Mucosa of descending colon (tissue), 3 donors: ENCODE measurements at regions of chr17 and their contacts with region 1.

Region 1: DNA sequence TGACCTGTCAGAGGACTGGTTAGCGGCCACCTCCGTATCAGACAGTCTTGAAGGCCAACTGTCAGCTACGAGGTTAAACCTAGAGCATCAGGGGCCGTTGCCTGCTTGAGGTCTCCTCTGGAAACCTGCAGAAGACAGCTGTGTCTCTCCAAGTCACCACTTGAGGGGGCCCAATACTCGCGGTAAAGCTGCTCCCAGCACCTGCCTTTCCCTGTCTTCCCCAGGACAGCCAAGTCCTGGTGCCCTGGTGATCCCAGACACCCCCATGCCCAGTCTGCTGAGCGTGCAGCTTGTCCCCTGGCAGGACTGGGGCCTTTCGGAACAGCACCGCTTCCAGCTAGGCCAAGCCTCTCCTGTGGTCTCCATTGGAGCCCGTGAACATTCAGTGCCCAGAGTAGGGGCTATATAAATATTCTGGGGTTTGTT is 80.1 kb downstream of the DNAH17 start:
- DNase-seq: peak; percentile 55 to 76 (median 70)
- ATAC-seq: peak; percentile 81
- H3K4me3 ChIP-seq: no peak overlapping the region
- H3K4me1 ChIP-seq: no peaks in the 10 kb centered on the region
- CTCF ChIP-seq: no peak

Region 2: DNA sequence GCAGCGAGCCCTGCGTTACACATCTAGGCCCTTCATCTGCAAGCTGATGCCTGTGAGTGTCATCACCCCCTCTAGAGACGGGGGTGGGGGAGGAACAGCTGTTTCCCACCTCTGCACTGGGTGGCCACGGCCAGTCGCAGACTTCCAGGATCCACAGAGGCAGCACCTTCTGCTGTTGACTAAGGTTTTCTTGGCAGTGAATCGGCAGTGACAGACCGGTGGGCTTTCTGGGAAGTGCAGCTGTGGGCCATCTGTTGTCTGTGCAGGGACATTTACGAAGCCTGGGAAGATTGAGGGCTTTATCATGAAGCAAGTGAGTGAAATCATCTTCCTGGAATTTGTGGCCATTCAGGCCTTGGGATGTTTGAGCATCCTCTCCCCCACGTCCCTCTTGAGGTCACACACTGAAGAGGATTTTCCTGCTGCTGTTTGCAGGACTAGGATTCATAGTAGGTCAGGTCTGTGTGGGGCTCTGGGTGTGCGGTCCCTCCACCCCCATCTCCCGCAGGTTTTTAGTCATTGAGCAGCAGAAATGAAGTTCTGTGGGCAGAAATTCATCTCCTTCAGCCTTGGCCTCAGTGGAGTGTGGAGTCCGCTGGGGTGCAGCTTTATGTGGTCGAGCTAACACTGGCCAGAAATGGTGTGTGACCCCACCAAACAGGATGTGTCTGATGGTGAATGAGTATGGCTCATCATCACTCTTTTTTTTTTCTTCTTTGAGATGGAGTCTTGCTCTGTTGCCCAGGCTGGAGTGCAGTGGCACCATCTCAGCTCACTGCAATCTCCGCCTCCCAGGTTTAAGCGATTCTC is 106.7 kb before region 1 on chr17:
- intact Hi-C with region 1: no loop called
- DNase-seq: peak in 1 of 3 donors; percentile 26
- ATAC-seq: peak; percentile 16
- H3K4me3 ChIP-seq: no peak overlapping the region
- H3K4me1 ChIP-seq: peaks cover 17% of the 10 kb centered on the region
- CTCF ChIP-seq: no peak

Region 3: GRCh38 chr17:78708510-78708973 is 211.4 kb after region 1 on chr17:
- intact Hi-C with region 1: loop called in 1 of 2 experiments (anchors 5 kb)
- DNase-seq: peak; percentile 57 to 74 (median 69)
- ATAC-seq: peak; percentile 92
- H3K4me3 ChIP-seq: no peak overlapping the region
- H3K4me1 ChIP-seq: peaks cover 8% of the 10 kb centered on the region
- CTCF ChIP-seq: peak; percentile 75

Region 4: DNA sequence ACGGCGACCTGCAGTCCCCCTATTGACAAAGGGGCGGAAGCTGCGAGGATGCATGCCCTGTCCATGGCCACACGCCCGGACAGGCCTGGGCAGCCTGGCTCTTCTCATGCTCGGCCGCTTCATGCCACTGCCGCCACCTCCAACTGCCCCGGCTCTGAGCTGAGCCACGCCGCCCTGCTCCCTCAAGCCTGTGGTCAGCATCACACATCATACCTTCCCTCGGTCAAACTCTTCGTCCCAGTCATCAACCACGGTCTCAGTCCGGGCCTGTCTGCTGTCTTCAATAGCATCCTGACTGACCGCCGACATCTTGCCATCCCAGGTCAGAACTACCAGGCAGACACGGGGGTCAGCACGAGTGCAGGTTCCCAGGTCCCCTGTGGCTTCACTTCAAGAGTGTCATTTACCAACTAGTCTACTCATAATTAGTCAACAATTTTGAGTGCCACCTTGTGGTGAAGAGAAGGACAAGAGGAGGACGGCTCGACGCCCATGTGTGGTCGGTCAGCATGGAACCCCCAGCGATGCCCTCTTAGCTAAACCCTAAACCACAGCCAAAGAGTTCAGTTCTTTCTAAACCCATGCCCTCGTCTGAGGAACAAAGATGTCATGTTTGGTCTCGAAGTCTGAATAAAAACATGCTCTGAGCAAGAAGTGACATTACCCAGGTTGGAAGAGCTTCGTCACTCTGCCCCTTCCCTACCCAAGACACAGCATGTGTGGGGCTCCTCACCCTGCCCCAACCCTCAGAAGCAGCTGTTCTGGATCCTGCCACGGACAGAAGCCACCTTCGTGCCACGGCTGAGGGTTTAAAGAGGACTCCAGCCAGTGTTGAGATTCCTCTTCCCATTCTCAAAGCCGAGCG is 301.8 kb after region 1 on chr17:
- intact Hi-C with region 1: loop called in 1 of 2 experiments (anchors 10 kb)
- DNase-seq: peak in 1 of 3 donors; percentile 46
- ATAC-seq: peak; percentile 46
- H3K4me3 ChIP-seq: no peak overlapping the region
- H3K4me1 ChIP-seq: no peaks in the 10 kb centered on the region
- CTCF ChIP-seq: no peak